ENCODE measurements at regions of chr20 and their contacts with region 1.

Region 1: GRCh38 chr20:50799890-50800655 is 5.2 kb downstream of the BCAS4 start:
- DNase-seq: no peak
- ATAC-seq: no peak
- H3K4me3 ChIP-seq: no peak overlapping the region
- H3K27ac ChIP-seq: no peak overlapping the region
- H3K4me1 ChIP-seq: no peaks in the 10 kb centered on the region
- H3K27me3 ChIP-seq: no peaks in the 10 kb centered on the region
- CTCF ChIP-seq: no peak
- POLR2A ChIP-seq: no peak

Region 2: GRCh38 chr20:50967586-50967985 is 167.5 kb after region 1 on chr20:
- intact Hi-C with region 1: loop called in 1 of 2 experiments (anchors 10 kb)
- DNase-seq: no peak
- ATAC-seq: no peak
- H3K4me3 ChIP-seq: no peak overlapping the region
- H3K27ac ChIP-seq: no peak overlapping the region
- H3K4me1 ChIP-seq: no peaks in the 10 kb centered on the region
- H3K27me3 ChIP-seq: no peaks in the 10 kb centered on the region
- CTCF ChIP-seq: no peak
- POLR2A ChIP-seq: no peak

Measured in right lobe of liver (tissue), 6 donors.